OCI-LY7 (cell line): ENCODE measurements at regions of chr10 and their contacts with region 1.

Region 1: GRCh38 chr10:5813287-5814109 is at the start of gene GDI2:
- DNase-seq: peak; percentile 99
- H3K4me3 ChIP-seq: peak within 1 kb of the TSS; percentile 94
- H3K27ac ChIP-seq: peak within 1 kb of the TSS; percentile 85
- H3K4me1 ChIP-seq: peaks cover 65% of the 10 kb centered on the region
- CTCF ChIP-seq: no peak
- total RNA-seq, gene GDI2: 265 and 270 TPM in 2 replicates

Region 2: GRCh38 chr10:5583525-5584175 is 229.8 kb before region 1 on chr10:
- CTCF ChIA-PET with region 1: no interaction called
- POLR2A ChIA-PET with region 1: no interaction called
- intact Hi-C with region 1: no loop called
- DNase-seq: peak; percentile 96
- H3K4me3 ChIP-seq: peak overlapping the region; percentile 42
- H3K27ac ChIP-seq: peak overlapping the region; percentile 88
- H3K4me1 ChIP-seq: peaks cover 87% of the 10 kb centered on the region
- CTCF ChIP-seq: no peak

Region 3: GRCh38 chr10:5614155-5614721 is 199.3 kb before region 1 on chr10:
- CTCF ChIA-PET with region 1: no interaction called
- POLR2A ChIA-PET with region 1: no interaction called
- intact Hi-C with region 1: no loop called
- DNase-seq: no peak
- H3K4me3 ChIP-seq: no peak overlapping the region
- H3K27ac ChIP-seq: no peak overlapping the region
- H3K4me1 ChIP-seq: no peaks in the 10 kb centered on the region
- CTCF ChIP-seq: no peak

Region 4: DNA sequence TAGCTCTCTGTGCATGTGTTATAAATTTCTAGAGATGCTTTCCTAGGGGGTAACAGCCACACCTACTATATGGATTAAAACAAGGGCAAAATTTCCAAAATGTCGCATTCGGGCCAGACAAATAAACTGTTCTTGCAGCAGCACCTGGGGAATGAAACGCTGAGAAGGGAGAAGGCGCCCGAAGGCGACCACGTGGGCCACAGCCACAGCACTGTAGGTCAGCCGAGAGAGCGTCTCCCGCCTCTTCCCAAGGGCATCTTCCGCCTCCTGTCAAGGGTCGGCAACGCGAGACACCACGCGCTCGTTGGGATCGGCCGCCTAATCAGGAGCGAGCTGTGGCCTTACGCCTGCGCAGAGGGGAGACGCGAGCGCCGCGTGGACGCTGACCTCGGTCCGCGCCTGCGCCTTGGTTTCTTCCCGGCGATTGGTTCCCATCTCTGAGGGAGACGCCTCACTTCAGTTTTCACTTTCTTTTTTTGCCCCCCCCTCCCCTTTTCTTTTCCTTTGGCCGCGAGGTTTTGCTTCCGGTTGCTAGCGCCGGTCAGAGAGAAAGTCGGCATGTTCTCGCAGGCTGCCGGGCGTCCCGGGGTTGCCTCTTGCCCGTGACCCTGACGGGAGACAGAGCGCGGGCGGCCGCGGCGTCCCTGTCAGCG is 129.1 kb before region 1 on chr10 and contains the start of gene TASOR2:
- CTCF ChIA-PET with region 1: no interaction called
- POLR2A ChIA-PET with region 1: interaction called, 5 read pairs
- intact Hi-C with region 1: loop called (anchors 2 kb)
- DNase-seq: peak; percentile 97
- H3K4me3 ChIP-seq: peak within 1 kb of the TSS; percentile 81
- H3K27ac ChIP-seq: peak within 1 kb of the TSS; percentile 77
- H3K4me1 ChIP-seq: peaks cover 47% of the 10 kb centered on the region
- CTCF ChIP-seq: no peak
- total RNA-seq, gene TASOR2: 103 and 113 TPM in 2 replicates

Region 5: DNA sequence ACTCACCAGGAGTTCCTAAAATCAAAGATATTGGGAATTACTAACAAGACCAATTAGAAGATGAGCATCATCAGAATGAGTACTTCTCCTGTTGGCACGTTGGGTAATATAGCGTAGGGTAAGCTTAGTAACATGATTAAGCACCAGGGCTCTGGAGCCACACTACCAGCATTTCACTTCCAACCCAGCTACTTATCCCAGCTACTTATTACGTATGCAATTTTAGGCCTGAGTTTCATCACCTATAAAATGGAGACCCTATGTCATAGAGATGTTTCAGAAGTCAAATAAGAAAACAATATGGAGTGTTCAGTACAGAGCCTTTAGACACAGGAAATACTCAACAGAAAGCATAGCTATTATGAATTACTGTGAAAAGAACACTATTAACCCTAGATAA is 19.3 kb before region 1 on chr10:
- CTCF ChIA-PET with region 1: interaction called, 3 read pairs
- POLR2A ChIA-PET with region 1: interaction called, 10 read pairs
- intact Hi-C with region 1: no loop called
- DNase-seq: no peak
- H3K4me3 ChIP-seq: no peak overlapping the region
- H3K27ac ChIP-seq: peak overlapping the region; percentile 15
- H3K4me1 ChIP-seq: no peaks in the 10 kb centered on the region
- CTCF ChIP-seq: no peak

Region 6: GRCh38 chr10:5873515-5873995 is 60.1 kb after region 1 on chr10:
- CTCF ChIA-PET with region 1: no interaction called
- POLR2A ChIA-PET with region 1: interaction called, 6 read pairs
- intact Hi-C with region 1: loop called (anchors 2 kb)
- DNase-seq: peak; percentile 79
- H3K4me3 ChIP-seq: no peak overlapping the region
- H3K27ac ChIP-seq: no peak overlapping the region
- H3K4me1 ChIP-seq: peaks cover 10% of the 10 kb centered on the region
- CTCF ChIP-seq: peak; percentile 86

Region 7: DNA sequence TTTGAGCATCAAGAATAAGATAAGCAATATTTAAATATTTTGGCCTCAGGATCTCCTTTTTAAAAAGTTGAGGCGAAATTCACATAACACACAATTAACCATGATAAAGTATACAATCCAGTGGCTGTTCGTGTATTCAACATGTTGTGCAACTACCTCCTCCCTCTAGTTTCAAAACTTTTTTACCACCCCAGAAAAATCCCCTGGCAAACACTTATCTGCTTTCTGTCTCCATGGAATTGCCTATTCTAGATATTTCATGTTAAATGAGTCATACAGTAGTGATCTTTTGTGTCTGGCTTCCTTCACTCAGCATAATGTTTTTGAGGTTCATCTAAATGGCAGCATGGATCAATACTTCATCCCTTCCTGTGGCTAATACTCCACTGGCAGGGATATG is 195.7 kb after region 1 on chr10:
- CTCF ChIA-PET with region 1: no interaction called
- POLR2A ChIA-PET with region 1: no interaction called
- intact Hi-C with region 1: no loop called
- DNase-seq: no peak
- H3K4me3 ChIP-seq: no peak overlapping the region
- H3K27ac ChIP-seq: no peak overlapping the region
- H3K4me1 ChIP-seq: peaks cover 4% of the 10 kb centered on the region
- CTCF ChIP-seq: no peak

Region 8: DNA sequence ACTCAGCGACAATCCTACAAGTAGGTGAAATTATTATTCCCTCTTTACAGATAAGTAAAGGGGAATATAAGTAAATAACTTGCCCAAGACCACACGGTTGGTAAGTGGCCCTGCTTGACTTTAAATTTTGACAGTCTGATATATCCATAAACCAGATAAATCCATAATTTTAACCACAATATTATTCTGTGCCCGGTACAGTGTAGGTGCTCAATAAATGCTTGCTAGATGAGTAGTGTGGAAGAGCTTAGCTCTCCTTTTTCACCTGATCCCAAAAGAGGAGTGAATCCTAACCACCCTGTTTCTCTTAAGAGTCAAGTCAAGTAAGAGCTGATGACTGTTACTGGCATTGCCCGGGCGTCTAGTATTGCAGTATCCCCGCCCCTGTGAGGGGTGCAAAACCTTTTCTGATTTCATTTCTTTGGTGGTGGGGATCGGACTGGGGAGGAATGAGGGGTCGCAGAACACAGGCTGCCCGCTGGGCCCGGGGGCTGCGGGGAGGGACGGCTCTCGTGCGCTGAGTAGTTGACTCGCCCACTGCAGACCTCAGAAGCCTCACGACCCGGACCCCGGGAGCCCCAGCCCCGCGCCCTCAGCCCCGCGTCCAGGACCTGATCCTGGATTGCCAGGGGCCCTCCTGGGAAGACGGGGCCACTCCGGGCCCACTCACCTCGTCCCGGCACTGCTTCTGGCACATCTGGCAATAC is 1973.8 kb after region 1 on chr10:
- CTCF ChIA-PET with region 1: no interaction called
- POLR2A ChIA-PET with region 1: no interaction called
- intact Hi-C with region 1: no loop called
- DNase-seq: peak; percentile 18
- H3K4me3 ChIP-seq: peak overlapping the region; percentile 79
- H3K27ac ChIP-seq: no peak overlapping the region
- H3K4me1 ChIP-seq: peaks cover 20% of the 10 kb centered on the region
- CTCF ChIP-seq: no peak